ENCODE measurements at regions of chr13 and their contacts with region 1.

Region 1: DNA sequence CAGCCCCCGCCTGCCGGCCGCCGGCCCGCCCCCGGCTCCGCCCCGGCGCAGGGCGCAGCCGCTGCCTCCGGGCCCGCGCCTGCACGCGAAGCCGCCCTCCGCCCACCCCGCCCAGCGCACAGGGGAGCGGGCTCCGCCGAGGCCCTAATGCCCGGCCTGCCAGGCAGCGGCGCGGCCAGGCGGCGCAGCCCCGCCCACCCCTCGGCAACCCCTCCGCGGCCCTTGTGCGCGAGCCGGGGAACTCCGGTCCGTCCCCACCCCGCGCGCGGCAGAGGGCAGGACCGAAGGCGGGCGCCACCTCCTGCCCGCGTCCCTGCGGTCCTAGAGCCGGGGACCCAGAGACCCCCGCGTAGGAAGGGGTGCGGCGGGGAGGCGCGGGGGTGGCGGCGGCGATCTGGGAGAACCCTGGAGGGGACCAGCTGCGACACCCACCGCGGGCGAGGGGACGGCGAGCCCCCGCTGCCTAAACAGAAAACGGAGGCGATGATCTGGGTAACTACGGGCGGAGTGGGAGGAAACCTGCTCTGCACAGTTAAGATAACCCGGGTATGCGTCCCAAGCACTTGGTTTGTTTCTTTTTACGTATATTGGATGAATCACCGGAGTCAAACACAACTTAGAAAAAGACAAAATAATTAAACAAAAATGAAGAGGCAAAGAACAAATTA is 350 bp upstream of the USP12 start:
- DNase-seq: peak; percentile 92 to 94 (median 93)
- H3K4me3 ChIP-seq: peak overlapping the region; percentile 15 to 63
- H3K4me3 Mint-ChIP-seq: peak overlapping the region; percentile 82 to 96 (median 90)
- H3K27ac ChIP-seq: peak overlapping the region; percentile 95
- H3K27ac Mint-ChIP-seq: peak overlapping the region; percentile 84 to 99 (median 96)
- H3K4me1 ChIP-seq: peaks cover 37% of the 10 kb centered on the region
- H3K4me1 Mint-ChIP-seq: peaks cover 31 to 46% (median 39%) of the 10 kb centered on the region in 4 donors
- H3K27me3 ChIP-seq: no peaks in the 10 kb centered on the region
- H3K27me3 Mint-ChIP-seq: no peaks in the 10 kb centered on the region

Region 2: DNA sequence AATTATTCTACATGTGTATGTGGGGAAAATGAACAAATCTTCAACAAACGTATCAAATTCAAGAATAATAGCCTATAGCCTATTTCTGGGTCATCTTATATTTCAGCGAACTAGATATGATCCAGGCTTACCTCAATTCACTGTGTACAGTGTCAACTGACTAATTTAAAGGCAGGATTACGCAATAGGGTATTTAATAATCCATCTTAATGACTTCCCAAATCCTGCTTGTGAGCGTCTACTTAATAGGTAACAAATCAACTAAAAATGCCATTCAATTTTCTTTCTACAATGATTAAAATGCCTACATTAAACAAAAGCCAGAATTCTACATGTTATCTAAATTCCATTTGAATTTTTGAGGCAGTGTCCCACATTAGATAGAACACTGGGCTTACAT is 67.4 kb before region 1 on chr13:
- CTCF ChIA-PET with region 1: no interaction called
- POLR2A ChIA-PET with region 1: interaction called, 4 read pairs
- intact Hi-C with region 1: loop called (anchors 5 kb)
- DNase-seq: no peak
- H3K4me3 ChIP-seq: no peak overlapping the region
- H3K4me3 Mint-ChIP-seq: no peak overlapping the region
- H3K27ac ChIP-seq: no peak overlapping the region
- H3K27ac Mint-ChIP-seq: no peak overlapping the region
- H3K4me1 ChIP-seq: no peaks in the 10 kb centered on the region
- H3K4me1 Mint-ChIP-seq: peaks cover 8 to 19% (median 15%) of the 10 kb centered on the region in 4 donors
- H3K27me3 ChIP-seq: no peaks in the 10 kb centered on the region
- H3K27me3 Mint-ChIP-seq: no peaks in the 10 kb centered on the region

Region 3: DNA sequence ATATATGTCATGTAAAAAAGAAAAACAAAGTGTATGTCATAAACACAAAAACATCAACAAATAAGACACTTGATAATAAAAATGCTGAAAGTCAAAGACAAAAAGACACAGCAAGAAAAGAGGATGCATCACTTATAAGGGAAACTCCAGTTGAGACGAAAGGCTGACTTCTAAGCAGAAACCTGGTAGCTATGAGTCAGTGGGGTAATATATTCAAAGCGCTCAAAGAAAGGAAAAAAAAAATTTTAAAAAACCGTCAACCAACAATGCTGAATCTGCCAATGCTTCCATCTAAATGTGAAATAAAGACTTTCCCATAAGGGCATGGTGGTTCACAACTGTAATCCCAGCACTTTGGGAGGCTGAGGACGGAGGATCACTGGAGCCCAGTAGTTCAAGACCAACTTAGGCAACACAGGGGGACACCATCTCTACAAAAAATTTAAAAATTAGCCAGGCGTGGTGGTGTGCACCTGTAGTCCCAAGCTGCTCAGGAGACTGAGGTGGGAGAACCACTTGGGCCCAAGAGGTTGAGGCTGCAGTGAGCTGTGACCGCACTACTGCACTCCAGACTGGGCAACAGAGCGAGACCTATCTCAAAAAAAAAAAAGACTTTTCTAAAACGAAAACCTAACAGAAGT is 24.3 kb before region 1 on chr13:
- CTCF ChIA-PET with region 1: no interaction called
- POLR2A ChIA-PET with region 1: no interaction called
- intact Hi-C with region 1: loop called (anchors 1 kb)
- DNase-seq: peak in 1 of 5 donors; percentile 19
- H3K4me3 ChIP-seq: no peak overlapping the region
- H3K4me3 Mint-ChIP-seq: peak overlapping the region in 4 of 8 donors; percentile 30 to 51 (median 34)
- H3K27ac ChIP-seq: no peak overlapping the region
- H3K27ac Mint-ChIP-seq: peak overlapping the region in 6 of 7 donors; percentile 29 to 68 (median 64)
- H3K4me1 ChIP-seq: peaks cover 53% of the 10 kb centered on the region
- H3K4me1 Mint-ChIP-seq: peaks cover 46 to 75% (median 62%) of the 10 kb centered on the region in 4 donors
- H3K27me3 ChIP-seq: no peaks in the 10 kb centered on the region
- H3K27me3 Mint-ChIP-seq: no peaks in the 10 kb centered on the region

Region 4: DNA sequence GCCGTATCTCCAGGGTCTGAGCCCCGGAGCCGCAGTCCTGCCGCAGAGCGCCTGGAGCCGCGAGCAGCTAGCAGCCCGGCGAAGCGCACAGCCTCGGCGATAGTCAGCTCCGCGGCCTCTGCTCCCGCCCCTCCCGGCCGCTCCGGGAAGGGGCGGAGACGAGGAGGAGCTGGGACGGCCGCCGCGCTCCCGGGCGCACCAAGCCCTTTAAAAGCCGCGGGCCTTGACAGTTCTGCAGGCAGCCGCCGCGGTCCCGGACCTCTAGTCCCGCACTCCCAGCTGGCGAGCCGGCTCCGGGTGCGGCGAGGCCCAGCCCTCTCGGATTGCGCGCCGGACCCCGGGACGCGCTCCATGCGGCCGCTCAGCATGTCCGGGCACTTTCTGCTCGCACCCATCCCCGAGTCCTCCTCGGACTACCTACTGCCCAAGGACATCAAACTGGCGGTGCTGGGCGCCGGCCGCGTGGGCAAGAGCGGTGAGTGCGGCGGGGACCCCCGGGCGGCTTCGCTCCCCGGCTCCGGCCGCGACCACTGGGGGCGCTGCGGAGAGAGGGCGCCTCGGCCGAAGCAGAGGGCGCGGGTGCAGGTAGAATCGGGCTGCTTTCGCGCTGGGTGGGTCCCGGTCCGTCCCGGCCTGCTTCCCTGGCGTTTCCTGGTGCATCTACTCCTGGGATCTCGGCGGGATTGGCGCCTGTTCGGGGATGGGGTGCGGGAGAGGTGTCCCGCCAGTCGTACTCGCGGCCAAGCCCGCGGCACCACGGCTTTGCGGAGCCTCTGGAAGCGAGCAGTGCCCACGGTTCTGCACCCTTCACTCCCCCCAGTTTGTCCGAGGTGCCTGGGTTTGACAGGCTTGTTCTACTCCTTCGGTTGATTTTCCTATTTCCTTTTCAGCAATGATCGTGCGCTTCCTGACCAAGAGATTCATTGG is 98.9 kb after region 1 on chr13 and contains the start of gene RASL11A:
- CTCF ChIA-PET with region 1: interaction called, 4 read pairs
- POLR2A ChIA-PET with region 1: interaction called, 4 read pairs
- intact Hi-C with region 1: loop called (anchors 5 kb)
- DNase-seq: peak; percentile 62 to 76 (median 69)
- H3K4me3 ChIP-seq: peak within 1 kb of the TSS; percentile 58 to 73
- H3K4me3 Mint-ChIP-seq: peak within 1 kb of the TSS; percentile 87 to 93 (median 90)
- H3K27ac ChIP-seq: peak within 1 kb of the TSS; percentile 52
- H3K27ac Mint-ChIP-seq: peak within 1 kb of the TSS in 6 of 7 donors; percentile 25 to 84 (median 70)
- H3K4me1 ChIP-seq: peaks cover 8% of the 10 kb centered on the region
- H3K4me1 Mint-ChIP-seq: peaks cover 7 to 13% (median 11%) of the 10 kb centered on the region in 4 donors
- H3K27me3 ChIP-seq: peaks cover 6% of the 10 kb centered on the region
- H3K27me3 Mint-ChIP-seq: peaks cover 10 to 18% of the 10 kb centered on the region in 2 donors
- total RNA-seq, gene RASL11A: 0.78 to 0.96 TPM

Region 5: DNA sequence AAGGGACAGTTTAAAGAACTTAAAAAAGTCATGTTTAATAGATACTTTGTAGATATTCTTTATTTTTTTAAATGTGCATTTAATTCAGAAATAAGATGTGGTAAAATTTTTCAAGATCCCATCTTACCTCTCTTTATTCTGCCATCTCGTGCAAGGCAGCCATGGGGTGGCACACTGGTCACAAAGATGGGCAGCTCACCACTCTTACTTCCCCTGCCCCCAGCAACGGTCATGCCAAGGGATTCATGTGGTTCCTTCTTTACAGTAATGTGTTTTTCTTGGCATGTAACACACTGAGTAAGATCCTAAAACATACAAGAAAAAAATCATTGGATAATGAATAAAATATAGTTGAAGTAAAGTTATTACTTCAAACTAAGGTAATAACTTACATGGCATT is 384.1 kb after region 1 on chr13:
- CTCF ChIA-PET with region 1: no interaction called
- POLR2A ChIA-PET with region 1: no interaction called
- intact Hi-C with region 1: no loop called
- DNase-seq: no peak
- H3K4me3 ChIP-seq: no peak overlapping the region
- H3K4me3 Mint-ChIP-seq: no peak overlapping the region
- H3K27ac ChIP-seq: no peak overlapping the region
- H3K27ac Mint-ChIP-seq: no peak overlapping the region
- H3K4me1 ChIP-seq: peaks cover 11% of the 10 kb centered on the region
- H3K4me1 Mint-ChIP-seq: peaks cover 6 to 14% (median 11%) of the 10 kb centered on the region in 4 donors
- H3K27me3 ChIP-seq: no peaks in the 10 kb centered on the region
- H3K27me3 Mint-ChIP-seq: no peaks in the 10 kb centered on the region